HepG2 (cell line): ENCODE measurements at regions of chr3 and their contacts with region 1.

Region 1: GRCh38 chr3:138397983-138398382 is 36.4 kb upstream of the ESYT3 start:
- DNase-seq: no peak
- ATAC-seq: no peak
- H3K4me3 ChIP-seq: no peak overlapping the region
- H3K27ac ChIP-seq: no peak overlapping the region
- H3K4me1 ChIP-seq: peaks cover 40% of the 10 kb centered on the region
- H3K27me3 ChIP-seq: no peaks in the 10 kb centered on the region
- CTCF ChIP-seq: 0 out of 2 replicates have a peak, but pooled peaks have one; percentile 18
- EP300 ChIP-seq: no peak
- POLR2A ChIP-seq: no peak
- RAD21 ChIP-seq: no peak

Region 2: DNA sequence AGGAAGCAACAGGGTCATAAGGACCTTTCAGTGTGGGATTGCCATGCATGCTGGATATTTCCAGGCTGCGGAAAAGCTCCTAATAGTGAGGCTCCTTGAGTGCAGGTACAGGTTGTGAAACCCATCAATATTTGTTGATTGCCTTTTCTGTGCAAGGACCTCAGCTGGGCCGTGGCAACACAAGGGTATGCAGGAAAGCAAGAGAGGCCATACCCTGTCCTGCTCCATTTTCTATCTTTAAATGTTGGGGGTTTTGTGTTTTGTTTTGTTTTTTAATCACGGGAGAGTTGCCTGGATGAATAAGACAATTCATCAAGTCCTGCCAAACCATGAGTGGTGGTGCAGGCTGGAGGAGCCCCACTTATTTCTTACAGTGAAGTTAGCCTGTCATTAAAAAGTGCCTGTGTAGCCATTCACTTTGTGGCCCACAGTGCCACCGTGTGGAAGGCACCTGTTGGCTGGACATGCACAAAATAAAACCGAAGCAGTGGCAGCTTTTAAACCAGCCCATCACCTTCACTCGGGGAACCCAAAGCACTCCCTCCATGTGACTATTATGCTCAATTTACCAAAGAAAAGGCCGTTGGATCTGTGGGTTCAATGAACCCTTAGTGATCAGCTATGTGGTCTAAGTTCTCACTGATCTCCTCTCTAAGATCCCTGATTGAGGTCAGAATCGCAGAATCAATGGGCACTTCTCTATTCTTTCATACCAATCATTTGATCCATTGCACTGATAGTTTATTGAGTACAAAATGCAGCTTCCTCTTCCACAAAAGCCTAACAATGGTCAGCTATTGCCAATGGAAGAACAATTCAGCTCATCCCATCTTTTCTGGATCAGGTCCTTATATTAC is 345.8 kb before region 1 on chr3:
- CTCF ChIA-PET with region 1: no interaction called
- POLR2A ChIA-PET with region 1: no interaction called
- in situ Hi-C with region 1: no loop called
- intact Hi-C with region 1: no loop called
- DNase-seq: peak; percentile 28
- ATAC-seq: peak; percentile 92
- H3K4me3 ChIP-seq: no peak overlapping the region
- H3K27ac ChIP-seq: no peak overlapping the region
- H3K4me1 ChIP-seq: no peaks in the 10 kb centered on the region
- H3K27me3 ChIP-seq: no peaks in the 10 kb centered on the region
- CTCF ChIP-seq: peak; percentile 82
- EP300 ChIP-seq: no peak
- POLR2A ChIP-seq: no peak
- RAD21 ChIP-seq: 0 out of 2 replicates have a peak, but pooled peaks have one; percentile 10

Region 3: DNA sequence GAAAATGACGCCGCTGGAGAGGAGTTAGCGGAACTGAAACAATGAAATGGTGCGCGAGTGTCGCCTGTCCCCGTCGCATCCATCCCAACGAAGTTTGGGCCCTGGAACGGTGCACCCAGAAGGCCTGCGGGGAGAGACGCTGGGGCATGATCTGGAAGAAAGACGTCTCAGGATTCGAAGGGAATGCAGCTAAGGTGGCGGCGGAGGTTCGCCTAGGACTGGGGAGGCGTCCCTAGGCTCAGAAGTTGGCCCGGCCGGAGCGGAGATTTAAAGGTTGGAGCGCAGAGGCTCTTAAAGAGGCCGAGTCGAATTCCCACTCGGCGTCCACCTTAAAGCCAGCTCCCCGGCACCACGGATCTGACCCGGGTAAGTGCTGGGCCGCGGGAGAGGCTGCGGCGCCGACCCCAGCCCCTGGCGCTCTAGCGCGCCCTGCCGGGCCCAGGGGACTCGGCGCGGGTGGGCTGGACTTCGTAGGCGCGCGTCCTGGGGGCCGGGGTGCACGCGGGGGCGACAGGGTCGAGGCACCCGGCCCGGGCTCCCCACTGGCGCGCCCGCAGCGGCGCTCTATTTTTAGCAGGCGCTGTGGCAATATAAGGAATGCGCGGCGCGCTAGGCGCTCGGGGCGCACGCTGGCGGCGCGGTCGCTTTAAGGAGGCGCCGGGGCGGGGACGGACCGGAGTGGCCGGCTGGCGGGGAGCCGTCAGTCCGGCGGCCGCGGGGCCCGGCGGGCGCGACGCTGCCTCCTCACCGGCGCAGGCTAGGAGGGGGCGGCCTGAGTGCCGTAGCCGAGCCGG is 49.8 kb before region 1 on chr3 and contains the start of gene MRAS:
- CTCF ChIA-PET with region 1: no interaction called
- POLR2A ChIA-PET with region 1: interaction called, 15 read pairs
- in situ Hi-C with region 1: loop called (anchors 5 kb)
- intact Hi-C with region 1: loop called (anchors 1 kb)
- DNase-seq: peak; percentile 59
- ATAC-seq: peak; percentile 78
- H3K4me3 ChIP-seq: peak within 1 kb of the TSS; percentile 77 to 86 (median 85)
- H3K27ac ChIP-seq: peak within 1 kb of the TSS; percentile 77
- H3K4me1 ChIP-seq: peaks cover 50% of the 10 kb centered on the region
- H3K27me3 ChIP-seq: no peaks in the 10 kb centered on the region
- CTCF ChIP-seq: peak; percentile 73
- EP300 ChIP-seq: 0 out of 4 replicates have a peak, but pooled peaks of 1 of the 2 experiments have one; percentile 8
- POLR2A ChIP-seq: no peak; a peak in 2 of 4 replicates
- RAD21 ChIP-seq: peak; percentile 83
- total RNA-seq, gene MRAS: 36.2 TPM in 2 replicates

Region 4: DNA sequence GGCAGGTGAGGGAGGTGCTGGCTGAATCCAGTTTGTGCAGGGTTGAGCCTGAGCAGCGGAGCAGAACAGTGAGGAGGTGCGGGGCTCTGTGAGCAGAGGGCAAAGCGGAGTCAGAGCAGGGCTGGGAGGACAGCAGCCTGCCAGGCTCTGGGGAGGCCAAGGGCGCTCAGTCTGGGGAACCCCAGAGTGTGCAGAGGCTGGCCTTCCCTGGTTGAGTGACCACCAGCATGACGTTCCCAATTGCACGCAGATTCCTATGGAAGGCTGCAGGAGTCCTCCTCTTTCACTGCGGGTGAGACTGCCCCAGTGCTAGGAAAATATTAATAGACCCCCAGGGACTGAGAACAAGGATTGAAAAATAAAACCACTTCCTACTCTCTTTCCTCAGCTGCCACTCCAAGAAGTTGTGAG is 36.4 kb before region 1 on chr3:
- CTCF ChIA-PET with region 1: no interaction called
- POLR2A ChIA-PET with region 1: no interaction called
- in situ Hi-C with region 1: no loop called
- intact Hi-C with region 1: loop called (anchors 5 kb)
- DNase-seq: no peak
- ATAC-seq: peak; percentile 11
- H3K4me3 ChIP-seq: no peak overlapping the region
- H3K27ac ChIP-seq: no peak overlapping the region
- H3K4me1 ChIP-seq: peaks cover 47% of the 10 kb centered on the region
- H3K27me3 ChIP-seq: no peaks in the 10 kb centered on the region
- CTCF ChIP-seq: no peak
- EP300 ChIP-seq: no peak
- POLR2A ChIP-seq: no peak
- RAD21 ChIP-seq: no peak

Region 5: DNA sequence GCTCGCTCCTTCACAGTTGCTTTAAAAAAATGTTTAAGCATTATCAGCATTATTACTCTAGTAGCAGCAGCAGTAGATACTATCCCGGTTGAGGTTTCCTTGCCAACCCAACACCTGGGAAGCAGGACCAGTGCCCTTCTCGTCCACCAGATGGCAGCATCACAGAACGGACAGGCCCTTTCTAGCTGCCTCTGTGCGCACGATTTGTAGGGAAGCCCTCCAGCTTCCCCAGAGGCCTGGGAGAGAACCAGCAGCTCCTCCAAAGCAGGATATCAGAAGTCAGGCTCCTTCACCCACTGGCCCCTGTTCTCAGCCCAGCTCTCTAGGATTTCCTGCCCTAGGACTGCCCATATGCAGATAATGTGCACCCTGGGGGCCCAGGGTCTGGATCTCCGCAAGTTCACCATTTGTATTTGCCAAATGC is 19.6 kb after region 1 on chr3:
- CTCF ChIA-PET with region 1: no interaction called
- POLR2A ChIA-PET with region 1: no interaction called
- in situ Hi-C with region 1: no loop called
- intact Hi-C with region 1: loop called (anchors 1 kb)
- DNase-seq: peak; percentile 82
- ATAC-seq: peak; percentile 98
- H3K4me3 ChIP-seq: no peak overlapping the region
- H3K27ac ChIP-seq: no peak overlapping the region
- H3K4me1 ChIP-seq: peaks cover 9% of the 10 kb centered on the region; the same call in 1 of the 2 replicates
- H3K27me3 ChIP-seq: no peaks in the 10 kb centered on the region
- CTCF ChIP-seq: peak; percentile 93
- EP300 ChIP-seq: no peak
- POLR2A ChIP-seq: no peak
- RAD21 ChIP-seq: peak; percentile 86

Region 6: DNA sequence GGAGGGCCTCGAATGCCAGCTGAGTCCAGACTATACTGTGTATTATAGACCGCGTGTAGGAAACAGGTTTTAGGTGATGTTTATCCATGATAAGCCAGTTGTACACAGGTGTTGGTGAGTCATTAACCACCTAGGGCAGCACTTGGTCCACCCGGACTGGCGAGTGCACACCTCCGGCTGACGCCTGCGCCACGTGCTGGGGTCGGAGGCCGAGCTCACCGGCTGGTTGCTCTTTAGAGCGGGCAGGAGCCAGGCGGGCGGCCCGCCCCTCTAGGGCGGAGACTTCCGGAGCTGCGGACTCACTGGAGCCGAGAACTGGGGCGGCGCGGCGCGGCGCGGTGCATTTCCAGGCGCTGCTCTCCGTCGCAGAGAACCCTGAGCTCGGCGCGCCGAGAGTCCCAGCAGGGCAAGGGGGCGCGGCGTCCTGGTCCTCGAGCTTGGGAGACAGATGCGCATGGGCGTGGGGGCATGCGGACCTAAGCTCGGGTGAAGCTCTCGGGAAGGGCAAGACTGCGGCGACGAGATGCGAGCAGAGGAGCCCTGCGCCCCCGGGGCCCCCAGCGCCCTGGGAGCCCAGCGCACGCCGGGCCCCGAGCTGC is 36.4 kb after region 1 on chr3 and contains the start of gene ESYT3:
- CTCF ChIA-PET with region 1: no interaction called
- POLR2A ChIA-PET with region 1: interaction called, 3 read pairs
- in situ Hi-C with region 1: no loop called
- intact Hi-C with region 1: loop called (anchors 2 kb)
- DNase-seq: peak; percentile 73
- ATAC-seq: peak; percentile 97
- H3K4me3 ChIP-seq: peak within 1 kb of the TSS; percentile 38 to 68 (median 47)
- H3K27ac ChIP-seq: no peak within 1 kb of the TSS
- H3K4me1 ChIP-seq: peaks cover 19% of the 10 kb centered on the region
- H3K27me3 ChIP-seq: peaks cover 0 to 4% of the 10 kb centered on the region in 2 experiments; a peak in 3 of 5 replicates
- CTCF ChIP-seq: 0 out of 2 replicates have a peak, but pooled peaks have one; percentile 17
- EP300 ChIP-seq: no peak
- POLR2A ChIP-seq: peak in 1 of 2 experiments; percentile 43; a peak in 1 of 4 replicates
- RAD21 ChIP-seq: peak; percentile 49; the same call in 1 of the 2 replicates
- total RNA-seq, gene ESYT3: 0.79 and 4.1 TPM in 2 replicates

Region 7: DNA sequence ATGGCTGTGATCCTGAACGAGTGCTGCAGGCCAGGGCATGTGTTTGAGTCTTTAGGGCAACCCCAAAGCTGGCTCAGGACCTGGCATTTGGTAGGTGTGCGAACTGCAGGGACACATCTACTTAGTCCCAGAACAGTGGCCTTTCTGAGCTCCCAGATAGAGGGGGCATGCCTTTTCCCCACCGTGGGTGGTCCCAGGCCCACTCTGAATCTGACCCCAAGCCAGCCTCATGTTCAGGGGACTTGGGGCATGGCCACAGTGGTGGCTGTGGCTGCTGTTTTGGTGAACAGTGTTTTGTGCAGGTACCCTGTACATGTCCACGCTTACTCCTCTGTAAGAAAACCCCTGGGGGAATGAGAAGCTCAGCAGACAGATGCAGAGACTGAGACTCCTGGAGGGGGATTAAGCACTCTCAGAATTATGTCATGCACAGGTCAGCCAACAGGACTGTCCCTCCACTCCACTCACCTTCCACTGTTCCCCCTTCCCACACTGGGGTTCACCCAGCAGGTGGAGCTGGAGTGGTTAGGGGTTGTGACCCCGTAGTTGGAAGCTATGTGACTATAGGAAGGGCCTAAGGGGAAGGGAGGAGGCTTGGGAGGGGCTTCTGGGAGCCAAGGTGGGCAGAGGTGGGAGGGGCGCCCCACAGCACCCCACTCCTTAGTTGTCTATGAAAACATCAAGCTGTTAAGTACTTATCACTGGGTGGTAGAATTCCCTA is 52.9 kb after region 1 on chr3:
- CTCF ChIA-PET with region 1: no interaction called
- POLR2A ChIA-PET with region 1: no interaction called
- in situ Hi-C with region 1: no loop called
- intact Hi-C with region 1: no loop called
- DNase-seq: no peak
- ATAC-seq: peak; percentile 52; the same call in 2 of the 3 replicates
- H3K4me3 ChIP-seq: no peak overlapping the region
- H3K27ac ChIP-seq: no peak overlapping the region
- H3K4me1 ChIP-seq: no peaks in the 10 kb centered on the region
- H3K27me3 ChIP-seq: no peaks in the 10 kb centered on the region
- CTCF ChIP-seq: no peak
- EP300 ChIP-seq: no peak
- POLR2A ChIP-seq: no peak
- RAD21 ChIP-seq: no peak